ENCODE measurements at regions of chr5 and their contacts with region 1.

Region 1: DNA sequence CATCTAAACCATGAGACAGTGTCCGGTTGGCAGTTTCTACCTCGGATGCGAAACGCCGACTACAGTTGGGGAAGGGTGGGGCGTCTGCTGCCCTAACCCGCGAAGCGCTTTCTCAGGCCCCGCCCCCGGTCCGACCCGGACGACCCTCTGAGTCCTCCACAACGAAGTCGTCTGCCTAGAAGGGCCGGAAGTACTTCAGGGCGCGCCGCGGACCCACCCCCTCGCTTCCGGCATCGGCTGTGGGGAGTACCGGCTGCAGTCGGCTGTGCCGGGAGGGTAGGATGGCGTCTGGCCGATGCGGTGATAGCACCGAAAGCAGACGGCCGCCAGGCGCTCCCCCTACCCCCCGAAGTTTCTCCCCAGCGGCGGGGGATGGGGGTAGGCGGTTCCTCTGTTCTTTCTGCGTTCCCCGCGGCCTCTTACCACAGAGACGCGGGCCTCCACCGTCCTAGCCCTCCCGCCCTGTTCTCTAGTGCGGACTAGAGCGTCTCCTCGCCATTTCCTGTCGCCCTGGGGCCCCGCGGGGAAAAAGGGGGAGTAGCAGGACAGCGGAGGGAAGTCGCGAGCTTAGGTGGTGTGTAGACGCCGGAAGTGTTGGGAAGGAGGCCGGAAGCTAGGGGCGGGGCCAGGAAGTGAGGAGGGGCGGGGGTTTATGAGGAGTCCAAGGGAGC is at the start of gene TRIM41:
- DNase-seq: peak; percentile 96 to 100 (median 98)

Region 2: DNA sequence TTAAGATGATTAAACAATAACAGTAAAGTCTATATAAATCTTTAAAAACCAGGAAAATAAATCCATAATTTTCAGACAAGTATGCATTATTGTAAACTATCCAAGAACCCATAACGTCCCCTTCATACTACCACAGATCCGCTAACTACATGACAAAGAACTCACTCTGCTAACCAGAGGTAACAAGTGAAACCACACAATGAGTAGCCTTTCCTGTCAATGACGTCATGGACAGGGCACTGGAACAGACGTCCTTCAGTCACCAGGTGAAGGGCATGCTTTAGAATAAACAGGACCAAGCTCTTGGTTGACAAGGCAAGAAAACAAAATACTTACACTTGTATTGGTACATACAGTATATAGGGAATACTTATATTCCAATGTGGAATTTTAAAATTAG is 1196.9 kb before region 1 on chr5:
- intact Hi-C with region 1: no loop called
- DNase-seq: no peak

Region 3: DNA sequence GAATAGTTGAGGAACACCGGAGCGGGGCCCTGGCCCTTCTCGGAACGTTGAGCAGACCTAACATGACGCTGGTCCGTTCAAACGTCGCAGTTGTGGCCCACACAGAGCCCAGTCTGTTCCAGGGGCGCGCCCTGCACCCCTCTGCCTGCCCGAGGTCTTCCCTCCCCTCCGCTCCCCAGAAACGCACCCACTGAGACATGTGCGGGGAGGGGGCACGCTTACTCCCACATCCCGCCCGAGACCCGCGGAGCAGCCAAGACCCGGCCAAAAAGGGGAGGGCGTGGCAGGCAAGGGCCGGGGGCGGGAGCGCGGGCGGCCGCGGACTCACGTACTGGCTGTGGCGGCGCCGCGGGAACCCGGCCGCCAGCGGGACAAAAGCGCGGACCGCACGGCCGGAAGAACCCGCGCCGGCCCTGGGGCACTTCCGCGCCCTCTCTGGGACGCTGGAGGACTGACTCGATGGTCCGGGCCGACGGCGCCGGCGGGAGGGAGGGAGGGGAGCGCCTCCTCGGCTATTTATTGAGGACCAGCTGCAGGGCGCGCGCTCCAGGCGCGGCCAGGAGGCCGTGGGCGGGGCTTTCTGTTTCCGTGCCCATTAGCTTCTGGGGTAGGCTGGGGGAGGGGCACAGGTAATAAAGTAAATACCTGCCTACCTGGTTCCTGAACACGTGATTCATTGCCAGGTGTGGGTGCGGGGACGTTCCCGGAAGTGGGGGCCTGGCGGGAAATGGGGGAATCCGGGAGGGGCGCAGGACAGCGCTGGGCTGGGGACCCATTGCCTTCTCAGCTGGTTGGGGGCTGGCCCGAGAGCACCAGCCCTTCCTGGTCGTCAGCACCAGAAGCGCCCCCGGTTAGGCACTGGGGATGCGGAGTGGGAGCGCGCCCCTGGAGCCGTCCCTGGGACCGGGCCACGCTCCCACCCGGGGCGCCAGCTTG is 362.0 kb before region 1 on chr5 and contains the start of gene ZFP62:
- intact Hi-C with region 1: loop called (anchors 5 kb)
- DNase-seq: peak; percentile 76 to 98 (median 86)

Region 4: DNA sequence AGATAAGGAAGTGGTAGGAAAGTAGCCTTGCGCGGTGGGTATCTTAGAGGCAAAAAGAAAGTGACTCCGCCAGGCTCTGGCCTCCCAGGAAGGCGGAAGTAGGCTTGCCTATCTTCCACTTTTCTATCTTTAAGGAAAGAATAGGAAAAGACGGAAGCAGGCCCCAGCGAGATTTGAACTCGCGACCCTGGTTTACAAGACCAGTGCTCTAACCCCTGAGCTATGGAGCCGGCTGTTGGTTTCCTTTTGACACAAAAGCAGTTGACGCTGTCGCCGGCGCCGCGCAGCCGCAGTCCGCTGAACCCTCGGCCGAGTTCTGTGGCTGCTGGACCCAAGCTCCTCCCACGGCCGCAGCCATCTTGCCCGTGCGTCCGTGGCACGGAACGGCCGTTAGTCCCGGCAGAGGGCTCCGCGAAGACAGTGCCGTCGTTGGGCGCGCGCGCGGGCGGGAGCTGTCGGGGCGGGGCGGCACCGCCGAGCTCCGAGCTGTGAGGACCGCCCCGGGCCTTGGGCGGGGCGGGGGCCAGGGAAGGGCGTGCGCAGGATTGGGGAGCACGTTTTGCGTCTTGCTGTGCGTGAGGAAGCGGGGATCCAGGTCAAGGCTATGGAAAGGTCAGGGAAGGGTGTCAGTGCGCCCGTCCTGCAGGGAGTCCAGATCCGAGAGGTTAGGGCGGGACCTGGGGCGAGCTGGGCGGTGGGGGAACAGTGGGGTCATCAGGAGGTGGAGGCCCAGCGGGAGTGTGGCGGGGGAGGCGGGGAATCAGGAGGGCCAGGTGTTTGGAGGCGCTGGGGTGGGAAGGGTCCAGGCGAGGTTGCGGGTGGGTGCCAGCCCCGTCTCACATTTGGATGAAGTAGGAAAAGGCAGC is 31.4 kb before region 1 on chr5:
- intact Hi-C with region 1: loop called (anchors 1 kb)
- DNase-seq: peak; percentile 91 to 99 (median 94)

Region 5: DNA sequence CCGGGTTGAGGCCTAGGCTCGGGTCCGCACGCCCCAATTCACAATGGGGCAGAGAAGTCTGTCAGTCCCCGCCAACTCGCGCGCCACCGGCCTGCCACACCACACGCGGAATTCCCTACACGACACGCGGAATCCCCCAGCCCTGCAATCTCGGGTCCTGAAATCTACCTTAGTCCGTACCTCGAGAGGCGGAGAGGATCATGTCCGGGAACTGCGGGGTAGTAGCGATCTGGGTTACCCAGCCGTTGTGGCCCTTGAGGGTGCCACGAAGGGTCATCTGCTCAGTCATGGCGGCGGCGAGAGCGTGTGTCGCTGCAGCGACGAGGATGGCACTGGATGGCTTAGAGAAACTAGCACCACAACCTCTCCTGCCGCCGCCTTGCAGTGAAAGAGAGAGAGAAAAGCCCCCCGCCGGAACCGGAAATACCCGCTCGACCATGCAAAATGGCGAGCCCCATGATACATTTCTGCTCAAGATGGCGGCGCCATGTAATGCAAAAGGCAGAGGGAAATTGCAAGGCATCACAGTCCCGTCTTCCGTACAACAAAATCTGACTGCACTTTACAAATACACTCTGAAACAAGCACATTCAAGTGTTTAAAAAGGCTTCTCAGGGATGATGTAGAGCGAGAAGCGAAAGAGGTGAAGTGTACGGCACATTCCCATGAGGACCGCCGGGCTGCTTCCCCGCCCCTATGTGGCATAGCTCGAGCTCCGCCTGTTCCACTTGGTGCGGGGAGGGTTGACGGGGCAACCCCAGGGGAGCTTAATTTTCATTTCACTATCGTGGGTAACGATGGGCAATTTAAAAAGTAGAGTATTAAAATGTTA is 20.5 kb after region 1 on chr5 and contains the start of gene RACK1:
- intact Hi-C with region 1: loop called (anchors 1 kb)
- DNase-seq: peak; percentile 84 to 98 (median 91)

Region 6: GRCh38 chr5:181260387-181261319 is 37.5 kb after region 1 on chr5 and contains the start of gene TRIM52:
- intact Hi-C with region 1: loop called (anchors 1 kb)
- DNase-seq: peak; percentile 80 to 99 (median 92)

Measured in posterior cingulate gyrus (tissue), 11 donors.